A549 (cell line): ENCODE measurements at regions of chr15 and their contacts with region 1.

Region 1: GRCh38 chr15:79339564-79340314 is 28.8 kb downstream of the TMED3 start:
- DNase-seq: peak; percentile 47 to 57
- ATAC-seq: peak; percentile 70 to 81
- H3K4me3 ChIP-seq: no peak overlapping the region
- H3K27ac ChIP-seq: no peak overlapping the region
- H3K4me1 ChIP-seq: no peaks in the 10 kb centered on the region
- CTCF ChIP-seq: peak; percentile 92
- EP300 ChIP-seq: no peak
- POLR2A ChIP-seq: no peak
- RAD21 ChIP-seq: peak; percentile 82 to 83

Region 2: GRCh38 chr15:79329171-79329611 is 10.5 kb before region 1 on chr15:
- CTCF ChIA-PET with region 1: interaction called, 12 read pairs
- POLR2A ChIA-PET with region 1: no interaction called
- DNase-seq: peak in 1 of 2 experiments; percentile 57
- ATAC-seq: peak; percentile 41 to 65; a peak in 3 of 6 replicates
- H3K4me3 ChIP-seq: no peak overlapping the region
- H3K27ac ChIP-seq: peak overlapping the region; percentile 22 to 72
- H3K4me1 ChIP-seq: peaks cover 12% of the 10 kb centered on the region
- CTCF ChIP-seq: no peak
- EP300 ChIP-seq: no peak
- POLR2A ChIP-seq: no peak
- RAD21 ChIP-seq: no peak

Region 3: DNA sequence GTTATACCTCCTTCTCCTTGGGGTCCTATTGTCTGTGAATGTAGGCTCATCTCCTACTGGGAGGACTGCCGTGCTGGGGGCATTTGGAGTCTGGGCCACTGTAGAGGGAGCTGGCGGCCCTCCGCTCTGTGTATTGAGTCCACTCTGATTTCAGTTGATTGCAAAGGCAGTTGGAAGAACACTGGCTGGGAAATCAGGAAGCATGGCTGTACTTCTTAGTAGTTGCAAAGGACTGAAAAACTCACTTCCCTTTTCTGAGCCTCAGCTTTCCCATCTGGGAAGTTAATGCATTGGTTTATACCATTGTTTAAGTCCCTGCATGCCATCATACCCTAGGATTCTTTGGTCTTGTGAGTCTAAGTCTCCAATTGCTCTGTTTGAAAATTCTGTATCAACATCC is 17.8 kb after region 1 on chr15:
- CTCF ChIA-PET with region 1: interaction called, 20 read pairs
- POLR2A ChIA-PET with region 1: no interaction called
- DNase-seq: no peak
- ATAC-seq: no peak
- H3K4me3 ChIP-seq: no peak overlapping the region
- H3K27ac ChIP-seq: no peak overlapping the region
- H3K4me1 ChIP-seq: no peaks in the 10 kb centered on the region
- CTCF ChIP-seq: no peak
- EP300 ChIP-seq: no peak
- POLR2A ChIP-seq: no peak
- RAD21 ChIP-seq: no peak

Region 4: DNA sequence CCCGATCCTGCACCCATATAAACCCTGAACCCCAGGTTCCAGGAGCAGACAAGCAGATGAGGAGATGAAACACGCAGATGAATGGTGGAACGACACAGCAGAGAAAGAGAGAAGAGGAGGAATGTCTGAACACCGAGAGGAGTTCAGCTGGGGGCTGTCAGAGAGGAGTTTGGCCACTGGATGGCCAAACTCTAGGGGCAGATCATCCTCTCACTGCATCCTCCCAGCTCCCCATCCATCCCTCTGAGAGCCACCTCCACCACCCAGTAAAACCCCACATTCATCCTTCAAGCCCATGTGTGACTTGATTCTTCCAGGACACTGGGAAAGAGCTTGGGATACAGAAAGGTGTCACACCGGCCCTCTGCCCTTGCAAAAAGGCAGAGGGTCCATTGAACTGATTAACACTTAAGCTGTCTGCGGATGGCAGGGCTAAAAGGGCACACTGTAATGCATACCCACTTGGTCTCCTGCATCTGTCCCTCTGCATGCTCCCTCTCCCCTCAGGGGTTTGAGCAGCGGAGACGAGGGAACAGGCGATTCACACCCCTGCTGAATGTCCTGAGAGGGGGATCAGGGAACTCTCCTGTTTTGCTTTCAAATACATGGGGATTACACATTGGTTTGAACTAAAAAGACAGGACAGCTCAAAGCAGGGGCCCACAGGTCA is 25.0 kb after region 1 on chr15:
- CTCF ChIA-PET with region 1: interaction called, 18 read pairs
- POLR2A ChIA-PET with region 1: no interaction called
- DNase-seq: no peak
- ATAC-seq: peak in 1 of 2 experiments; percentile 47; a peak in 1 of 6 replicates
- H3K4me3 ChIP-seq: no peak overlapping the region
- H3K27ac ChIP-seq: no peak overlapping the region
- H3K4me1 ChIP-seq: no peaks in the 10 kb centered on the region
- CTCF ChIP-seq: no peak
- EP300 ChIP-seq: no peak
- POLR2A ChIP-seq: no peak
- RAD21 ChIP-seq: no peak